ENCODE measurements at regions of chr5 and their contacts with region 1.

Region 1: GRCh38 chr5:74919487-74919886 is 53.3 kb upstream of the FAM169A start:
- DNase-seq: peak in 1 of 2 experiments; percentile 47
- H3K4me3 ChIP-seq: no peak overlapping the region
- H3K27ac ChIP-seq: no peak overlapping the region
- H3K4me1 ChIP-seq: peaks cover 22% of the 10 kb centered on the region
- H3K27me3 ChIP-seq: no peaks in the 10 kb centered on the region
- CTCF ChIP-seq: peak; percentile 72

Region 2: GRCh38 chr5:73902327-73903051 is 1017.0 kb before region 1 on chr5:
- CTCF ChIA-PET with region 1: no interaction called
- POLR2A ChIA-PET with region 1: no interaction called
- intact Hi-C with region 1: loop called (anchors 5 kb)
- DNase-seq: no peak
- H3K4me3 ChIP-seq: no peak overlapping the region
- H3K27ac ChIP-seq: peak overlapping the region; percentile 89
- H3K4me1 ChIP-seq: peaks cover 44% of the 10 kb centered on the region
- H3K27me3 ChIP-seq: no peaks in the 10 kb centered on the region
- CTCF ChIP-seq: peak; percentile 92

Region 3: DNA sequence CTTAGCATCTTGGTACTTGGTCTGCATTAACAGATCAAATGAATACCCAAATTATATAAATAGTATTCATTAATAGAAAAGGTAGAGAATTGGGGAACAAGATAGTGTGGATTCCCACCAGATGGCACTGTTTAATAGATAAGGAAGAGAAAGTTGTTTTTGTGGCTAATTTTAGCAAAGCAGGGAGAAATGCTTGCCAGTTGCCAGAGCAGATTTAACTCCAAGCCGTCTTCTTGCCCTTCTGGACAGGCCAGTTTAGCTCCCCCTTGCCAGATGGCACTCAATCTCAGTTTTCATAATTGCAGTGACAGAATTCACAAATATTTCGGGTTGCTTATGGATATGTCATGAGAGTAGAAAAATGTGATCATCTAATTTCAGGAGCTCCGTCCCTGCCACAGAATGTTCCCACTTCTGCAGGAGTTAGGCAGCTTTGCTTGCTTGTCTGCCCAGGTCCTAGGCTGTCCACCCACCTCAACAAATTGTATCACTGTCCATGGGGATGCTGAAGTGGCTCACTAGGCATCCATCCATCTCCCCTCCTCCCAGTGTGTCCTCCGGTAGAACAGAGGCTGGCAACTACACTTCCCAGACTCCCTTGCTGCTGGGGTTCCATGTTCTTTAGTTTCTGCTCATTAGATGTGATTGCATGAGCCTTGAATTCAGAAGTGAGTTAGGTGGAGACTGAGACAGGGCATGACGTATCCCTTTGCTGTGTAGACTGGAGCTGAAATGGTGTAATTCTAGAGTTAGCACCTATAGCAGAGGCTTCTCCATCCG is 246.3 kb before region 1 on chr5:
- CTCF ChIA-PET with region 1: no interaction called
- POLR2A ChIA-PET with region 1: no interaction called
- intact Hi-C with region 1: loop called (anchors 1 kb)
- DNase-seq: peak; percentile 29 to 66
- H3K4me3 ChIP-seq: no peak overlapping the region
- H3K27ac ChIP-seq: no peak overlapping the region
- H3K4me1 ChIP-seq: peaks cover 9% of the 10 kb centered on the region; the same call in 1 of the 2 replicates
- H3K27me3 ChIP-seq: no peaks in the 10 kb centered on the region
- CTCF ChIP-seq: peak; percentile 63

Region 4: DNA sequence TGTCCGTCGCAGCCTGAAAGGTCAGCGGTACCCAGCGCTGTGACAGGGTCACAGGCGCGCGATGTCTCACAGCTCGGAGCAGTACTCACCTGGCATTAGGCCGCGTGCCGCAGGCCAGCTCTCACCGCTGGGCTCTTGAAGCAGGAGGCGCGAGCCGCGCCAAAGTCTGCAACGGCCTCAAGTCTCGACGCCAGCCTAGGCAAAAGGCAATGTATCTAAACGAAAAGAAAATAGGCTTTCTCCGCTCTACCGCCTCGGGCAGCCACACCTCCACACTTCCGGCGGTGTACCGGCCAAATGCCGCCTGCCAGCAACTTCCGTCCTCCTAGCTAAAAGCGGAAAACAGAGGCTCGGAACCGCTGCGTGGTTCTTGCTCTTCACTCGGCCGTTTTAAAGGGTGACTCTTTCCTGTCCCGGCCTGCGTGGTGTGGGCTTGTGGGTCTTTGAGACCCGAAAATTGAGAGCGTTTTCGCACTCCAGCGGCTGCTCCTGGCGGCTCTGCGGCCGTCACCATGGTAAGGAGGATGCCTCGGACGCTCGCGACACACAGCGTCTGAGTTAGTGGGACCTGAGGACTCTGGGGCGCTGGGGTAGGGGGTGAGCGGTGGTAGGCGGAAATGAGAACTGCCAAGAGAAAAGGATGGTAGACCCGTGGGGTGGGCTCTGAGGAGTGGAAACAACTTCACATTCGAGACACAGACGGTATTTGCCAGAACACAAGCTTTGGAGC is 152.5 kb before region 1 on chr5 and contains the starts of genes GFM2 and NSA2:
- CTCF ChIA-PET with region 1: no interaction called
- POLR2A ChIA-PET with region 1: no interaction called
- intact Hi-C with region 1: loop called (anchors 5 kb)
- DNase-seq: peak; percentile 83 to 88
- H3K4me3 ChIP-seq: peak within 1 kb of the TSS; percentile 83
- H3K27ac ChIP-seq: peak within 1 kb of the TSS; percentile 58
- H3K4me1 ChIP-seq: peaks cover 44% of the 10 kb centered on the region
- H3K27me3 ChIP-seq: no peaks in the 10 kb centered on the region
- CTCF ChIP-seq: no peak; the same call in 1 of the 2 replicates
- total RNA-seq, gene GFM2: 38.5 and 39.8 TPM in 2 replicates
- total RNA-seq, gene NSA2: 47.3 and 87.1 TPM in 2 replicates

Region 5: GRCh38 chr5:74786867-74787266 is 132.6 kb before region 1 on chr5:
- CTCF ChIA-PET with region 1: interaction called, 17 read pairs
- POLR2A ChIA-PET with region 1: no interaction called
- intact Hi-C with region 1: no loop called
- DNase-seq: no peak
- H3K4me3 ChIP-seq: no peak overlapping the region
- H3K27ac ChIP-seq: no peak overlapping the region
- H3K4me1 ChIP-seq: no peaks in the 10 kb centered on the region
- H3K27me3 ChIP-seq: no peaks in the 10 kb centered on the region
- CTCF ChIP-seq: no peak

Region 6: DNA sequence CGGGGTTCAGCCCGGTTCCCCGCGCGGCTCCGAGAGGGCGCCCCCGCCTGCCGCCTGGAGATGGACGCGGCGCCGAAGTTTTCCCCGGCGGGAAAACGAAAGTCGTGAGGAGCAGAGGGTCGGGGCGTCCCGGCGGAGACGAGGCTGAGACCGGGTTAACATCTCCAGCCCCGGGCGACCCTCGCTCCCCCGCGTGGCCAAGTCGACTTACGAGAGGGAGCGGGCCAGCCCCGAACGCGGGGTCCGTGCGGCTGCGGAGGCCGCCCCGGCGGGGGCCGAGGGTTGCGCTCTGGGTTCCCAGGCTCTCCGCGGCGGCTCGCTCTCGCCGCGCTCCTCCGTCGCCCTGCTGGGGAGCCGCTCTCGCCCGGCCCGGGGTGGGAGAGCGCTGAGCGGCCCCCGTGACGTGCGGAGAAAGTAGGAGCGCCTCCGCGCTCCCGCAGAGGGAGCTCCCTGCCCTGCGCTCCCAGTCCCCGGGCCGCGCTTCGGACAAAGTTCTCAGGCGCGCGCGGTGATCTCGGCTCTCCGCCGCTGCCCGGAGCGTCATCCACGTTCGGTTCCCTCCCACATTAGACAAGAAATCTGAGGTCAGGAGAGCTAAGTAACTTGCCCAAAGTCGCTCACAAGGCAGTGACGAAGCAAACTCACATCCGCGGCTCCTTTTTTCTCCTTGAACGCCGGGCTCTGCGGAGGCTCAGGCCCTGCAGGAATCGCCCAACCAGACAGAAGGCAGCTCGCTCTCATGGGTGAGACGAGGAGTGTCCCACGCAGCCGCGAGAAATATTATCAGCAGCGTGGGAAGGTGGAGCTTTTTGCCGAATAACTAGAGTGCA is 134.0 kb after region 1 on chr5:
- CTCF ChIA-PET with region 1: interaction called, 24 read pairs
- POLR2A ChIA-PET with region 1: interaction called, 3 read pairs
- intact Hi-C with region 1: loop called (anchors 2 kb)
- DNase-seq: peak; percentile 60 to 66
- H3K4me3 ChIP-seq: peak overlapping the region; percentile 72
- H3K27ac ChIP-seq: 0 out of 2 replicates have a peak overlapping the region, but pooled peaks have one; percentile 9
- H3K4me1 ChIP-seq: peaks cover 20% of the 10 kb centered on the region
- H3K27me3 ChIP-seq: no peaks in the 10 kb centered on the region
- CTCF ChIP-seq: peak; percentile 27; the same call in 1 of the 2 replicates

Region 7: GRCh38 chr5:75236322-75237316 is 317.1 kb after region 1 on chr5 and contains the start of gene ANKRD31:
- CTCF ChIA-PET with region 1: interaction called, 15 read pairs
- POLR2A ChIA-PET with region 1: no interaction called
- intact Hi-C with region 1: loop called (anchors 10 kb)
- DNase-seq: peak; percentile 52 to 84
- H3K4me3 ChIP-seq: peak within 1 kb of the TSS; percentile 94
- H3K27ac ChIP-seq: peak within 1 kb of the TSS; percentile 43
- H3K4me1 ChIP-seq: peaks cover 33% of the 10 kb centered on the region
- H3K27me3 ChIP-seq: no peaks in the 10 kb centered on the region
- CTCF ChIP-seq: no peak; the same call in none of the 2 replicates
- total RNA-seq, gene ANKRD31: 0.23 and 0.48 TPM in 2 replicates